Activated B cell treated with CpG ODN at 0.5 μM for 24 hours (primary cell): ENCODE measurements at regions of chr13 and their contacts with region 1.

Region 1: DNA sequence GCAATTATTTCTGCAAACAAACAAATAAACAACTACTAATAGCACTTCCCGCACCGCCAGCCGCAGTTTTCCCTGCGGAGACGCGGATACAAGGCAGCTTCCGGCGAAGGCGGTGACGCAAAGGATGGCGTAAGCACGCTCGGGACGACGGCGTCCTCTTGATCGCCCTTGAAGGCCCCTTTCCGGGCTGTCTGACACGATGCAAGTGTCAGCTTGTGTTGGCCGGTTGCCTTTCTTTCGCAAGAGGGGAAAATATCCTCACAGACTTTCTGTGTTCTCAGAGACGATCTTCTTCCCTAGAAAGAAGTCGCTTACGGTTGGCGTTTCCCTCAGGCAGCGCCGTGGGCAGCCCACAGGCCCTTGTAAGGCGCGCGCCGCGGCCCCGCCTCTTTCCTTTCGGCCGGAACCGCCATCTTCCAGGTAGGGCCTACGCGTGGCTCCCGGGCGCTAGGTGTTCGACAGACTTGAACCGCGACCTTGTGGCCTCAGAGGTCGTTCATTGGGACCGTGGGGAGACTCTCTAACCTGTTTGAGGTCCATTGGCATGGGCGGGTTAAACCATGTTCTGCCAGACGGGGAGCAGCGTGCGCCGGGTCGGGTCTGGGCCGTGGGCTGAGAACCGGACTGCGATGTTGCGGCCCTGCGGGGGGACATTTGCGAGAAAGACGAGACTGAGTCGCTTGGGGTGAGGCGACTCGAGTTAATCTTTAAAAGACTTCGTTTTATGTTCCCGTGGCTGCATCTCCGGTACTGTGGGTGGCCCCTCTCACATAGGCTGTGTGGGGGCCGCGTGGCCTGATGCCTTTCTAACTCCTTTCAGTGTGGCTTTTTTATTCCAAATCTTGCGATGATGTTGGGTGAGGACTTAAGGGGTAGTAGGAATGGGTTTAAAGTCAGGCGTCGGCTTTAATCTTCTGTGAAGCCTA is at the start of gene RPL21:
- DNase-seq: peak; percentile 89
- ATAC-seq: peak; percentile 93
- H3K4me3 Mint-ChIP-seq: peak within 1 kb of the TSS; percentile 93
- H3K27ac Mint-ChIP-seq: peak within 1 kb of the TSS; percentile 99
- H3K4me1 Mint-ChIP-seq: peaks cover 48% of the 10 kb centered on the region
- H3K27me3 Mint-ChIP-seq: no peaks in the 10 kb centered on the region
- CTCF ChIP-seq: no peak
- total RNA-seq, gene RPL21: 1,996 and 2,528 TPM in 2 replicates

Region 2: DNA sequence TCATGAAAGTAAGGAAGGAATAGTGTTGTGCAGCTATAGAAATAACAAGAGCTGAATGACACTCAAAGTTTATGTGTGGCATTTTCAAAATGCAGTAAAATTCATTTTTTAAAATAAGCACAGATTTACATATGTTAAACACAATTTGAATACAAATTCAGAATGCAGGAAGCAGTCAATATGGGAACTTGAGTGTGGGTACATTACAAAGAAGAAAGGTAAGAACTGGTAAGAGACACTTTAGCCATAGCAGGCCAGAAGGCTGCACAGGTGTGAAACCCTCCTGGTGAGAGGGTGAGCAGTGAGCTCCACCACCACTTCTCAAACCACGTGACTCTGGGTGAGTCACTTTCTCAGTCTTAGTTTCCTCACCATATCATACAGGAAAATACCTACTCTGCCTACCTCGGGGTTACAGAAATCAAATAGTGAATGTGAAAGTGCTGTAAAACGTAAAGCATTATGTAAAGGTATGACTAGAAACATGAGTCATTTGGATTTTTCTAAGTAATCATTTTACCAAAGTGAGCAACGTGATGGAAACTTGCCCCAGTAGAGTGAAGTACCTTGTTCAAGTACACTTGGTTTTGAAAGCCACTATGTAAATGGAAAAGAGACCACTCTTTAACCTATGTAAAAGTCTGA is 120.3 kb before region 1 on chr13:
- CTCF ChIA-PET with region 1: no interaction called
- POLR2A ChIA-PET with region 1: interaction called, 8 read pairs
- intact Hi-C with region 1: loop called (anchors 1 kb)
- DNase-seq: peak; percentile 28
- ATAC-seq: peak; percentile 88
- H3K4me3 Mint-ChIP-seq: peak overlapping the region; percentile 2
- H3K27ac Mint-ChIP-seq: peak overlapping the region; percentile 88
- H3K4me1 Mint-ChIP-seq: peaks cover 91% of the 10 kb centered on the region
- H3K27me3 Mint-ChIP-seq: no peaks in the 10 kb centered on the region
- CTCF ChIP-seq: no peak

Region 3: GRCh38 chr13:27194895-27195764 is 56.3 kb before region 1 on chr13:
- CTCF ChIA-PET with region 1: no interaction called
- POLR2A ChIA-PET with region 1: interaction called, 6 read pairs
- intact Hi-C with region 1: loop called (anchors 2 kb)
- DNase-seq: no peak
- ATAC-seq: no peak
- H3K4me3 Mint-ChIP-seq: no peak overlapping the region
- H3K27ac Mint-ChIP-seq: no peak overlapping the region
- H3K4me1 Mint-ChIP-seq: peaks cover 17% of the 10 kb centered on the region
- H3K27me3 Mint-ChIP-seq: peaks cover 5% of the 10 kb centered on the region
- CTCF ChIP-seq: no peak

Region 4: GRCh38 chr13:27424246-27425157 is 173.1 kb after region 1 on chr13 and contains the start of gene GTF3A:
- CTCF ChIA-PET with region 1: no interaction called
- POLR2A ChIA-PET with region 1: no interaction called
- intact Hi-C with region 1: loop called (anchors 10 kb)
- DNase-seq: peak; percentile 91
- ATAC-seq: peak; percentile 72
- H3K4me3 Mint-ChIP-seq: peak within 1 kb of the TSS; percentile 79
- H3K27ac Mint-ChIP-seq: peak within 1 kb of the TSS; percentile 86
- H3K4me1 Mint-ChIP-seq: peaks cover 42% of the 10 kb centered on the region
- H3K27me3 Mint-ChIP-seq: no peaks in the 10 kb centered on the region
- CTCF ChIP-seq: no peak
- total RNA-seq, gene GTF3A: 119 and 134 TPM in 2 replicates

Region 5: DNA sequence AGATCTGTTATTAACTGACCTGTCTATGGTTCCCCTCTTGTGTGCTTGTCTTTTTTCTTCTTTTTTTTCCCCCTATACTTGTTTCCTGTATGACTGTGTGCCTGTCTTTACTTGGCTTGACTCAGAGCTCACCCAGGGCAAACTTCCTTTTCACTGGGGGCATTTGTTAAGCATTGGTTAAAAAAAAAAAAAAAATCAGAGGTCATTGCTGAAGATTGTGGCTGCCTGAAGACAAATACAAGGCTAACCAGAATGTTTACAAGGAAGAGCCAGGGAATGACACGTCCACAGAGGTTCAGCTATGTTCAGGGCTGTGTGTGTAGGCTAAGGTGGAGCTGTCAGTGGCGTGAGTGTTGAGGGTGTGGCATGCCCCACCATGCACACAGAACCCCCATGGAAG is 321.8 kb after region 1 on chr13:
- CTCF ChIA-PET with region 1: no interaction called
- POLR2A ChIA-PET with region 1: no interaction called
- intact Hi-C with region 1: no loop called
- DNase-seq: no peak
- ATAC-seq: no peak
- H3K4me3 Mint-ChIP-seq: no peak overlapping the region
- H3K27ac Mint-ChIP-seq: no peak overlapping the region
- H3K4me1 Mint-ChIP-seq: peaks cover 5% of the 10 kb centered on the region
- H3K27me3 Mint-ChIP-seq: no peaks in the 10 kb centered on the region
- CTCF ChIP-seq: no peak

Region 6: DNA sequence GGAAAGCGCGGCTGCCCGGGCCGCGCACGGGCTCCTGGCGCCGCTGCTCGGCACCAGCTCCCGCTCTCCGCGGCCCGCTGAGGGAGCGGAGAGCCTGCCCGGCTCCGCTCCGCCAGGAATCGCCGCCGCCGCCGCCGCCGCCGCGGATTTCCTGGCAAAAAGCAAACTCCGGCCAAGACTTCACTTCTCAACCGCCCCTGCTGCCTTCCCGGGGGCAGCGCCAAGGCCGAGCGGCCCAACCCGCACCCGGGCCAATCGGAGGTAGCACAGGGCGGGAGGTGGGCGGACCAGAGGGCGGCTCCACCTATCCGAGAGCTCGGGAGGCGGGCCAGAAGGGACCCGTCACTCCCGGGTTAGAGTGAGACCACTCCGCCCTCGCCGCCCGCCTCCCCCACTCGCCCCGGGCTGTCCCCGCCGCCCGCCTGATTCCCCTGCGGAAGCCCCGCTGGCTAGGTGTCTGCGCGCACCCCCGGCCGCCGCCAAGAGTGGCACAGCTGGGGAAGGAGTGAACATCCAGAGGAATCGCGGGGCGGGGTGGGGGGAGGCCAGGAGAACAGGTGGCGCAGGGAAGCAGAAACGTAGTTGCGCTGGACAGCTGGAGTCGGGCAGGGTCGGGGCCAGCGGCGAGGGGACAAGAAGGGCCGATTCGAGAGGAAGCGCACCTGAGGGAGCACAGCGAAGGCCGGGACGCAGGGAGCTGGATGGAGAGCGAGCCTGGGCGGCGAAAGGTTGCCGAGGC is 369.1 kb after region 1 on chr13 and contains the start of gene LNX2:
- CTCF ChIA-PET with region 1: no interaction called
- POLR2A ChIA-PET with region 1: no interaction called
- intact Hi-C with region 1: loop called (anchors 1 kb)
- DNase-seq: peak; percentile 97
- ATAC-seq: peak; percentile 87
- H3K4me3 Mint-ChIP-seq: peak within 1 kb of the TSS; percentile 93
- H3K27ac Mint-ChIP-seq: peak within 1 kb of the TSS; percentile 93
- H3K4me1 Mint-ChIP-seq: peaks cover 54% of the 10 kb centered on the region
- H3K27me3 Mint-ChIP-seq: no peaks in the 10 kb centered on the region
- CTCF ChIP-seq: no peak
- total RNA-seq, gene LNX2: 6.1 and 7.1 TPM in 2 replicates